H1 (cell line): ENCODE measurements at regions of chr1 and their contacts with region 1.

Region 1: GRCh38 chr1:244361764-244362473 is 89.8 kb downstream of the ADSS2 start:
- DNase-seq: peak in 1 of 2 experiments; percentile 57
- H3K4me3 ChIP-seq: peak overlapping the region in 2 of 4 experiments; percentile 2 to 27; a peak in 2 of 8 replicates
- H3K27ac ChIP-seq: peak overlapping the region; percentile 42
- H3K4me1 ChIP-seq: peaks cover 2 to 8% (median 4%) of the 10 kb centered on the region in 4 experiments; a peak in 6 of 7 replicates
- H3K27me3 ChIP-seq: no peaks in the 10 kb centered on the region
- CTCF ChIP-seq: no peak
- EP300 ChIP-seq: peak in 1 of 2 experiments; percentile 38; a peak in 1 of 3 replicates
- POLR2A ChIP-seq: no peak
- RAD21 ChIP-seq: no peak

Region 2: DNA sequence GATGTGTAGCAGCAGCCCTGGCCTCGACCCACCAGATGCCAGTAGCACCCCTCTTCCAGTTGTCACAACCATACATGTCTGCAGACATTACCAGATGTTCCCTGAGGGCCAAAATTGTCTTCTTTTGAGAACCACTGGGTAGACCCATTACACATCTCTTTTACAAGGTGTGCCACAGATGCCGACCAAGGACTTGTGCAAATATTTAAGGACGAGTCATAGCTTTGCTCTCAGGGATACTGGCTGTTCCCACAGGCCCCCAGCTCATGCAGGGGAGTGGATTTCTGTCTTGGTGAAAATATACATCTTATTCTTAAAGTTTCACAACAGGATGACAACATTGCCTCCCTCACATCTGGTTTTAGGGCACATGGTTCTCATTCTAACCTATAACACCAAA is 370.3 kb before region 1 on chr1:
- CTCF ChIA-PET with region 1: no interaction called
- POLR2A ChIA-PET with region 1: no interaction called
- DNase-seq: no peak
- H3K4me3 ChIP-seq: no peak overlapping the region
- H3K27ac ChIP-seq: no peak overlapping the region
- H3K4me1 ChIP-seq: peaks cover 0 to 3% (median 0%) of the 10 kb centered on the region in 4 experiments; a peak in 1 of 7 replicates
- H3K27me3 ChIP-seq: no peaks in the 10 kb centered on the region
- CTCF ChIP-seq: no peak
- EP300 ChIP-seq: no peak
- POLR2A ChIP-seq: no peak
- RAD21 ChIP-seq: no peak

Region 3: GRCh38 chr1:244339776-244340175 is 22.1 kb before region 1 on chr1:
- CTCF ChIA-PET with region 1: no interaction called
- POLR2A ChIA-PET with region 1: no interaction called
- DNase-seq: no peak
- H3K4me3 ChIP-seq: no peak overlapping the region
- H3K27ac ChIP-seq: no peak overlapping the region
- H3K4me1 ChIP-seq: peaks cover 7 to 21% (median 10%) of the 10 kb centered on the region in 4 experiments; a peak in 6 of 7 replicates
- H3K27me3 ChIP-seq: no peaks in the 10 kb centered on the region
- CTCF ChIP-seq: no peak
- EP300 ChIP-seq: no peak
- POLR2A ChIP-seq: no peak
- RAD21 ChIP-seq: no peak

Region 4: DNA sequence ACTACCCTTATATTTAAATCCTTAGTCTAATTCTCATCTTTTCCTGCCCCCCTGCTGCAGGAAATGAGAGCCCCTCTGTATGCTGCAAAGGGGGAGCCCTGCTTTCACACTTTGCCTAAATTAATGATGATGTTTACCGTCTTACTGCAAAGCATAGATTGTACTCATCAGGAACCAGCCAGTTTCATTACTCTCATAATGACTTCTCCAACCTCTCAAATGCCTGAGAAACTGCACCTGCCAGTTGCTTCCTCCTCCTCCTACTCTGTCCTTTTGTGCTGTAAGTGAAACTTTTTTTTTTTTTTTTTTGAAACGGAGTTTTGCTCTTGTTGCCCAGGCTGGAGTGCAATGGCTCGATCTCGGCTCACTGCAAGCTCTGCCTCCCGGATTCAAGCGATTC is 11.9 kb before region 1 on chr1:
- CTCF ChIA-PET with region 1: no interaction called
- POLR2A ChIA-PET with region 1: interaction called, 10 read pairs
- DNase-seq: no peak
- H3K4me3 ChIP-seq: no peak overlapping the region
- H3K27ac ChIP-seq: no peak overlapping the region
- H3K4me1 ChIP-seq: peaks cover 0 to 18% (median 17%) of the 10 kb centered on the region in 4 experiments; a peak in 6 of 7 replicates
- H3K27me3 ChIP-seq: no peaks in the 10 kb centered on the region
- CTCF ChIP-seq: no peak
- EP300 ChIP-seq: no peak
- POLR2A ChIP-seq: no peak
- RAD21 ChIP-seq: no peak

Region 5: GRCh38 chr1:244388961-244389360 is 27.0 kb after region 1 on chr1:
- CTCF ChIA-PET with region 1: no interaction called
- POLR2A ChIA-PET with region 1: no interaction called
- DNase-seq: no peak
- H3K4me3 ChIP-seq: no peak overlapping the region
- H3K27ac ChIP-seq: no peak overlapping the region
- H3K4me1 ChIP-seq: no peaks in the 10 kb centered on the region
- H3K27me3 ChIP-seq: no peaks in the 10 kb centered on the region
- CTCF ChIP-seq: no peak
- EP300 ChIP-seq: no peak
- POLR2A ChIP-seq: no peak
- RAD21 ChIP-seq: no peak

Region 6: DNA sequence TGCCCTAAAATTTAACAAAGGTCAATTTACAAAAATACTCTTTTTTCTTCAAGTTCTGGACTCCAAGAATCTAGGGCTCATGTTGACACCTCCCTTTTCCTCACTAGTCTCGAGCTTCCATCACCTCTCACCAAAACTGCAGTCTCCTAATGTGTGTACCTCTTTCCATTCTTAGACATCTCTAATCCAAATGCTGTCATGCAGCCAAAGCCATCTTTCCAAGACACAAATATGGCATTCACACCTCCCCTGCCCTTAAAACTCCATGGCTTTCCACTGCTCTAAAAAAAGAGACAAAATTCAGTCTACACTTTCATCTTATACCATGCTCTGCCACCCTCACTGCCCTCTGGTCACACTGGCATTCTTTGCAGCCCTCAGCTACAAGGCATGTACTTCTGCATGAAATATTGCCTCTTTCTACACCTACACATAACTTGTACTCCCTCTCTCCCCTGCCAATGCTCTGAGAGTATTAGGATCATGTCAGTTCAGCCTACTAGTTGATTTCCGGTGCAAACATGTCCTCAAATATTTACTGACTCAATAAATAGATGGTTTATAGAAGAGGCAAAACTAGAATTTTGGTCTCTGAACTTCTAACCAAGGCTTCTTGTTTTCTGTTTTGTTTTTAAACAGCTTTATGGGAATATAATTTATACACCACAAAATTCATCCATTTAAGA is 62.9 kb after region 1 on chr1:
- CTCF ChIA-PET with region 1: no interaction called
- POLR2A ChIA-PET with region 1: no interaction called
- DNase-seq: no peak
- H3K4me3 ChIP-seq: no peak overlapping the region
- H3K27ac ChIP-seq: no peak overlapping the region
- H3K4me1 ChIP-seq: no peaks in the 10 kb centered on the region
- H3K27me3 ChIP-seq: no peaks in the 10 kb centered on the region
- CTCF ChIP-seq: no peak
- EP300 ChIP-seq: no peak
- POLR2A ChIP-seq: no peak
- RAD21 ChIP-seq: no peak